Common myeloid progenitor, CD34-positive (primary cell): ENCODE measurements at regions of chr3 and their contacts with region 1.

Region 1: DNA sequence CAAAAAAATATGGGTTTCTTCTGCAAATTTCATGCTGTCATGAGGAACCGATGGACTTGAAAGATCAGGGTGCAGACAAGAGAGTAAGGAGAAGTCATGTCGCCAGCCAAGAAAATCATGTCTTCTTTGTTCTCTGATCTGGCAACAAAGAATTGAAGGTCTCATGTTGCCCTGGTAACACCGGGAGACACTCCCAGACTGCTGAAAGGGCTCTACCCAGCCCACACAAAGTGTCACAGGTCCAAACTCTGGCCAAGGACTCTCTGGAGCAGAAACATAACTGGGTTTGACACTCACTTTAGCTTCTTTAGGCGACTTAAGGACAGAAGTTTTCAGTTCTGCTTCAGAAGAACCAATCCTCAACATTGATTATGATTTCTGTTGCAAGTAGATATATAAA is 42.9 kb downstream of the SIDT1 start:
- DNase-seq: no peak
- H3K4me3 ChIP-seq: no peak overlapping the region
- H3K27ac ChIP-seq: no peak overlapping the region
- H3K4me1 ChIP-seq: no peaks in the 10 kb centered on the region
- H3K27me3 ChIP-seq: no peaks in the 10 kb centered on the region

Region 2: DNA sequence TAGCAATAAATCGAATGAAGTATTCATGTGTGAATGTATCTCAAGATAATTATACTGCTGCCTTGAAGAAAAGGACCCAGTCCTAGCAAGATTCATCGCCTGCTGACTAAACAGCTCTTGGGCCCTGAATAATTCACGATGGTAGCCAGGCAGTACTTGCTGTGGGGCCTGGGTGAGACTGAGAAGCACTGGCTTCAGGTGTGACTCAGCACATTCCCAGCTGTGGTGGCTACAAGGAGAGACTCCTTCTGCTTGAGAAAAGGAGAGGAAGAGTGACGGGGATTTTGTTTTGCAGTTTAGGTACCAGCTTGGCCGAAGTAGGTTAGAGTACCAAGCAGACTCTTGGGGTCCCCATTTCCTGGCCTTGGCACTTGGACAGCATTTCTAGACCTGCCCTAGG is 680.9 kb before region 1 on chr3:
- CTCF ChIA-PET with region 1: no interaction called
- POLR2A ChIA-PET with region 1: no interaction called
- DNase-seq: peak in 2 of 3 donors; percentile 14 to 25
- H3K4me3 ChIP-seq: no peak overlapping the region
- H3K27ac ChIP-seq: no peak overlapping the region
- H3K4me1 ChIP-seq: no peaks in the 10 kb centered on the region
- H3K27me3 ChIP-seq: peaks cover 0 to under 1% (median 0%) of the 10 kb centered on the region in 5 experiments

Region 3: GRCh38 chr3:113514265-113514769 is 60.9 kb before region 1 on chr3:
- CTCF ChIA-PET with region 1: interaction called, 17 read pairs
- POLR2A ChIA-PET with region 1: no interaction called
- DNase-seq: no peak
- H3K4me3 ChIP-seq: peak overlapping the region; percentile 61 to 96 (median 93)
- H3K27ac ChIP-seq: peak overlapping the region; percentile 77 to 87
- H3K4me1 ChIP-seq: peaks cover 10 to 23% (median 16%) of the 10 kb centered on the region in 4 experiments
- H3K27me3 ChIP-seq: no peaks in the 10 kb centered on the region

Region 4: DNA sequence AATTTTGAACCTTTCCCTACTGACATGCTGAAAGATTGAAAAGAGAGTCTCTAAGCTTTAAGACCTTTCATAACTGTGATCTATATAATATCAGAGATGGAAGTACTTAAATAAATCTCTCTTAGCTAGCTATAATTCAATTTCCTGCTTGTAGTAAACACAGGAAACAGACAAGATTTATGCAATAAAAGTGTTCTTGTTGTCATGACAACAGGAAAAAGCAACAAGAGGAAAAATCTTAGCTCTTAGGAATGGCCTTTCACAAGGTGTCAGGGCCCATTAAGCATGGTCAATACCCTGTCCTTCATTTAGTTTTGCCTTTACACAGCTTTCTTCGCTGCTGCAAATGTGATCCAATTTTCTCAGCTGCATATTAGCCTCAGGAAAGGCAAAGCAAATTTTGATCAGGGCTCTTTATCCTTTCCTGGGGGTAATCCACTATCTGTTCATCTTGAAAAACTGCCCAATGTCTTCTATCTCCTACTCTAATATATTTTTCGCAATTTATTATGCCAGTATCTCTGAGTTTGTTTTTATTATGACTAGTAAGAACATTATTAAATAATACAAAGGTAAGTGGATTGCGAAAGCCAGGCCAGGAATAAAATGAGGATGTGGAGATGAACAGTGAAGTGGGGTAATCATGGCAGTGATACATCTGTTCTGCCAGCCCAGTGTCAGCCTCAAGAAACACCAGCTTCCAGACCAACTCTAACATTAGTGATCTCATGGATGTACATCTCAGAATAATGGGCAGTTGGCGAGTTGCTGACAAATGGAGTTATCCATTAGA is 14.2 kb before region 1 on chr3:
- CTCF ChIA-PET with region 1: interaction called, 17 read pairs
- POLR2A ChIA-PET with region 1: no interaction called
- DNase-seq: peak; percentile 22 to 53 (median 51)
- H3K4me3 ChIP-seq: no peak overlapping the region
- H3K27ac ChIP-seq: peak overlapping the region in 1 of 2 experiments; percentile 33
- H3K4me1 ChIP-seq: peaks cover 0 to 12% (median 4%) of the 10 kb centered on the region in 4 experiments
- H3K27me3 ChIP-seq: no peaks in the 10 kb centered on the region

Region 5: DNA sequence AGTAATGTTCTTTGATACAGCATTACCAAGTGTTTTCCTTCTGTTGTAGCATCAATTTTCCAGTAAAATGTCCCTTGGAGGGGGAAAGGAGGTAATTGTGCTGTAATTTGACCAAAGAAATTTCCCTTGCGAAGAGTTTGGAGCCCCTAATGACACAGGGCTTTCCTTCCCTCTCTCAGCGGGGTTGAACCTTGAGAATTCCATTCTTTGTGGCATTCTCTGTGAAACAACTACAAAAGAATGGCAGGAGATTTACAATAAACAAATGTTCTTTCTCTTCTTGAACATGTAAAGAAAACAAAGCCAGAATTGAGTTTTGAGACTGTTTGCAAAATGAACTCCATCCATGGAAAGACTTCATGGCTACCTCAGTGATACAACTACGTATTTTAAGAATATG is 10.5 kb after region 1 on chr3:
- CTCF ChIA-PET with region 1: interaction called, 10 read pairs
- POLR2A ChIA-PET with region 1: no interaction called
- DNase-seq: no peak
- H3K4me3 ChIP-seq: no peak overlapping the region
- H3K27ac ChIP-seq: no peak overlapping the region
- H3K4me1 ChIP-seq: no peaks in the 10 kb centered on the region
- H3K27me3 ChIP-seq: no peaks in the 10 kb centered on the region

Region 6: DNA sequence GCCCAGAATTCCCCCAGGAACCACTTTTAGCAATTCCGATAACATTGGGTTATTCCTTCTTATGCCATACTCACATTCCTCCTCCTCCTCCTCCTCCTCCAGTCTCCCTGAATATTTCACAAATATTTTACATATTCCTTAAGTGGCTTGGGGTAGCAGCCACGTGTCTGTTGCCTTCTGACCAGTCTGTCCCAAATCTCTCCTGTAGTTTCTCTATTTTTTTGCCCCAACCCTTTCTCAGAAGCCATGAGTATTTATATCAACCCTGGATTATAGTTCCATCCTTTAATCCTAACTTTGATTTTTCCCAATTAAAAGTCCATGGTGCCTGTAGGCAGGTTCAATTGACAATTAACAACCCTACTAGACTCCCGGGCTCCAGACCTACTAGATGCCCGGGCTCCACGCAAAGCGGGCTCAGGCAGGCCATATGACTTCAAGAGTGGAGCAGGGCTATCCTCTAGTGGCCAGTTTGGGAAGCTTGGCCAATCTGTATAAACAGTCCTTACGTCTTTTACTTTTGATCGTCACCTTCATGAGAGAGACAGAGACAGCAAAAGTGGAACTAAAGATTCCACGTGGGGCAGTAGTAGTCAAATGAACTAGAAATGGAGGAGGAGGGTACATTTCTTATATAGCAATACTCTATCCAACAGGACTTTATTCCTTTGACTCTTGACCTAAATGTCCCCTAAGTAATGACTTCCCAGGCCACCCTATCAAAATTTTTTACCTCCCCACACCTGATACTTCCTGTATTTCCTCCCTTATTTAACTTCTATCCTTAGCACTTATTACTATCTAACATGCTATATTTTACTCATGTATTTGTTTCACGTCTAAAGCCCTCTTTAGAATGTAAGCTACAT is 51.5 kb after region 1 on chr3:
- CTCF ChIA-PET with region 1: interaction called, 12 read pairs
- POLR2A ChIA-PET with region 1: no interaction called
- DNase-seq: peak; percentile 80 to 88 (median 88)
- H3K4me3 ChIP-seq: peak overlapping the region in 2 of 7 experiments; percentile 6 to 55
- H3K27ac ChIP-seq: peak overlapping the region in 1 of 2 experiments; percentile 32
- H3K4me1 ChIP-seq: peaks cover 0 to 20% (median 13%) of the 10 kb centered on the region in 4 experiments
- H3K27me3 ChIP-seq: no peaks in the 10 kb centered on the region

Region 7: DNA sequence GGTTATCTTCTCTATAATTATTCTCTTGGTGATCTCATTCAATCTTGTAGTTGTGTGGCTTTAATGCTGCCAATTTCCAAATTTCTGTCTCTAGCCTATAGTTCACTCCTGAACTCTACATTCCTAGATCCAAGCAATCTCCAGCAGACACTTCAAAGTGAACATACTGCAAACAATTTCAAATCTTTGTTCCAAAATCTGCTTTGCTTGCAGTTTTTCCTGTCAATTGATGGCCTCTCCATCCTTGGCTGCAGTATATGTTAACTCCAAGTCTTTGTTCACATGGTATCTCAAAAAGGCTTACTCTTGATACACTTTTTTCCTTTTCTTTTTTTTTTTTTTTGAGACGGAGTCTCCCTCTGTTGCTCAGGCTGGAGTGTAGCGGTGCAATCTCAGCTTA is 153.5 kb after region 1 on chr3:
- CTCF ChIA-PET with region 1: no interaction called
- POLR2A ChIA-PET with region 1: no interaction called
- DNase-seq: no peak
- H3K4me3 ChIP-seq: no peak overlapping the region
- H3K27ac ChIP-seq: no peak overlapping the region
- H3K4me1 ChIP-seq: no peaks in the 10 kb centered on the region
- H3K27me3 ChIP-seq: no peaks in the 10 kb centered on the region

Region 8: DNA sequence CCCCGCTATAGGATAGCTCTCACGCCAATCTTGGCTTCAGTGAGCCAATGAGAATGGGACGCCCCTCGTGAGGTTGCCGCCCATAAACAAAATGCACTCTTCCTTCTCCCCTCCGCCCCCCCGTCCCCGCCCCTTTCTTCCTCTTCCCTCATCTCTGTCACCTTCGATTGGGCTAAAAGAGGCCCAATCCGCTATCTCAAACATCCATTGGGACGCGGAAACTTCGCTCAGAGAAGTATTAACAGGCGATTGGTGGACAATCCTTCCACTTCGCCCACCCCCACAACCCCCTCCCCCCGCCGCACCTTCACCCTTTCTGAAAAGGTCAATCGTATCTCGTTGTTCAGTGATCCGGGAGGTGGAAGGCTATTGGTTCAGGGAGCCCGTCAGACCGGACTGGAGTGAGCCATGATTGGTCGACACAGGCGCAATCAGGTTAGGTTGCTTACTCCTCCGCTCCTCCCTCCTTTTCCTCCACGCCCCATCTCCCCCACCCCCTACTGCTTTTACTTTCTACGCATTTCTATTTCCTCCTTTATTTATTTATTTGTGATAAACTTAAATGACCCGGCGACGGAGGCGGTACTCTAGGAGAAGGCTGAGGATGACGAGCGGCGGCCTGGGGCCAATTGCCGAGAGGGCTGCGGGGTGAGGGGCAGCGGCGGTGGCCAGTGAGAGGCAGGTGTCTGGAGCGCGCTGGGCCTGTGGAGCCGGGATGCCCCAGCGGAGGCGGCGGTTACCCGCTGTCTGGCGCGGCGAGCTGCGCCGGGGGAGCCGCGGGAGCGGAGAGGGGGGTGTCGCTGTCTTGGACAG is 1572.3 kb after region 1 on chr3:
- CTCF ChIA-PET with region 1: no interaction called
- POLR2A ChIA-PET with region 1: no interaction called
- DNase-seq: peak; percentile 100
- H3K4me3 ChIP-seq: peak overlapping the region; percentile 57 to 94 (median 82)
- H3K27ac ChIP-seq: peak overlapping the region; percentile 95 to 98
- H3K4me1 ChIP-seq: peaks cover 4 to 23% (median 14%) of the 10 kb centered on the region in 4 experiments
- H3K27me3 ChIP-seq: no peaks in the 10 kb centered on the region